ENCODE measurements at regions of chr2 and their contacts with region 1.

Region 1: GRCh38 chr2:70656421-70657010 is 102.9 kb upstream of the TGFA start:
- DNase-seq: no peak
- H3K4me3 Mint-ChIP-seq: no peak overlapping the region
- H3K27ac Mint-ChIP-seq: no peak overlapping the region
- H3K4me1 Mint-ChIP-seq: no peaks in the 10 kb centered on the region
- H3K27me3 Mint-ChIP-seq: peaks cover 98% of the 10 kb centered on the region
- CTCF ChIP-seq: no peak

Region 2: DNA sequence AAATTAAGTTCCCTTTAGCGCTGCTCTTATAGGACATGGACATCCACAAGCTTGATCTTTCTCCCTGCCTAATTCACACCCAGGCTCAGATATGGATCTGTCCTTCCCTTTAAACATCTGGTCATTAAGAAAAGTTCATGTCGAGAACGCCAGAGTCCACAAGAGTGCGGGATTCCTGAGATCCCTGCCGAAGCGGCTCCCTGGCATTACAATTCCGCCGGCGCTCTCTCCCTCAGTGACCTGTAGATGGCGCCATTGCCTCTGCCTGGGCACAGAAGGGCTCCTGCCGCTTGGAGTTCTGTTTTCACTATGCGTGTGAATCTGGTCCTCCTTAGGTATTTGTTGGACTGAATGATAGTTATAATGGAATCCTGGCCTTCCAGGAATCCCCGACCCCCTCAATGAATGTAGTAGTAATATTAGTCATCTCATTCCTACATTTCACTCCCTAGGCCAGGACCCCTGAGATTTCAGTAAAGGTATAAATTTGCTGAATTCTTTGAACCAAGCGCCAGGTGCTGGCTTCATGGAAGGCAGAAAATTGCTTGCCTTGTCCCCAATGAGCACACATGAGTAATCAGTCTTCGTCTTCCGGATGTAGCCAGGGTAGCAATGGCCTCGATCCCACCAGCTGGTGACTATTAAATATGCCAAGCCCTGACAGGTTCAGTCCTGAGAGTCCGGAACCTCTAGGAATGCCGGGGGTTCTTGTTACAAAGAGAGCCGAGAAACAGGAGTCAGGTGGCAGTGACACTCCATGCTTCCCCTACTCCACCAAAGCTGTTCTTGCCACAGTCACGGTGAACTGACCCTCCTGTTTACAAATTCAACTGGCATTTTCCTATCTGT is 205.5 kb after region 1 on chr2:
- CTCF ChIA-PET with region 1: interaction called, 3 read pairs
- intact Hi-C with region 1: loop called (anchors 5 kb)
- DNase-seq: peak; percentile 85
- H3K4me3 Mint-ChIP-seq: no peak overlapping the region
- H3K27ac Mint-ChIP-seq: no peak overlapping the region
- H3K4me1 Mint-ChIP-seq: peaks cover 8% of the 10 kb centered on the region
- H3K27me3 Mint-ChIP-seq: peaks cover 85% of the 10 kb centered on the region
- CTCF ChIP-seq: peak; percentile 89